ENCODE measurements at regions of chrX and their contacts with region 1.

Region 1: DNA sequence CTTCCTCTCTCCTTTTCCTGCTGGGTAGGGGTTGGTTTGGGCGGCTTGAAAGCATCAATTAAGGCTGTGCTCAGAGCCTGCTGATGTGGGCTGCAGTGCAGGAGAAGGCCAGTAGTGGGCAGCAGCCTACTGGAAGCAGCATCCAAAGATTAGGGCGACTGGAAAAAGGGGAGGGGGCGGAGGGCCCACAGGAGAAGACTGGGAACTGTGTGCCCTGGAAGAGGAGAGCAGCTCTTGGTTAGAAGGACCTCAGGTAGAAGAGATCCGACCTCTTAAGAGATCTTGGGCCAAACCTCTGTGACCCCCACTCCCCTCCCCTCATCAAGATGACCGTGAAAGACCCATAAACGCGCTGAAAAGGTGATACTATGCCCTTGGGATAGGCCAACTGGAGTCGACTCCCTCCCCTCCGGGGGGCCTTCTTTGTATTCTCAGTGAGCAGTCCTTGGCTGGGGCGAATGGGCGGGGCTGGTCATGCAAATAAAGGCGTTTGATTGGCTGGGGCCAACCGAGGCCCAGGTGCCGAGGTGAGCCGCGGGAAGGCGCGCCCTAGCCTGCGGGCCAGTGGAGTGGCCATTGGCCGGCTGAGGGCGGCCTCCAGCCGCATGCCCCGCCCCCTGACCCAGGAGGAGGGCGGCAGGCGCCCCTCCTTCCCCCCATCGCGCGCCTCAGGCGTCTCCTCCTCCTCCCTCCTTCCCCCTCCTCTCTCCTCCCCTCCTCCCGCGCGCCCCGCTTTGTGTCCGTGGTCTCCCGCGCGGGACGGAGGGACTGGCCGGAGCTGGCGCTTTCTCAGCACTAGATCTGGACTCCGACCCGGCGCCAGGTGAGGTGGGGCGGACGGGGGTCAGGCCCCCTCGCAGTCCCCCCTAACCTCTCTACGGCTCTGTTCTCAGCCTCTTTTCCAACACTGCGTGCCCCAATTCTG is 10.1 kb downstream of the DLG3 start:
- DNase-seq: peak; percentile 65 to 87 (median 76)
- H3K4me3 ChIP-seq: peak overlapping the region in 2 of 4 donors; percentile 43 to 51
- H3K27ac ChIP-seq: peak overlapping the region in 2 of 5 donors; percentile 18 to 52
- H3K4me1 ChIP-seq: no peaks in the 10 kb centered on the region
- H3K27me3 ChIP-seq: peaks cover 8% of the 10 kb centered on the region
- CTCF ChIP-seq: peak; percentile 66 to 77 (median 74)
- POLR2A ChIP-seq: no peak

Region 2: GRCh38 chrX:70332600-70332999 is 122.1 kb before region 1 on chrX:
- intact Hi-C with region 1: no loop called
- DNase-seq: no peak
- H3K4me3 ChIP-seq: no peak overlapping the region
- H3K27ac ChIP-seq: no peak overlapping the region
- H3K4me1 ChIP-seq: no peaks in the 10 kb centered on the region
- H3K27me3 ChIP-seq: peaks cover 20% of the 10 kb centered on the region
- CTCF ChIP-seq: no peak
- POLR2A ChIP-seq: no peak

Region 3: GRCh38 chrX:70554081-70554480 is 99.4 kb after region 1 on chrX:
- intact Hi-C with region 1: loop called in 1 of 2 experiments (anchors 5 kb)
- DNase-seq: no peak
- H3K4me3 ChIP-seq: no peak overlapping the region
- H3K27ac ChIP-seq: no peak overlapping the region
- H3K4me1 ChIP-seq: no peaks in the 10 kb centered on the region
- H3K27me3 ChIP-seq: peaks cover 5% of the 10 kb centered on the region
- CTCF ChIP-seq: peak in 2 of 6 experiments; percentile 18 to 21
- POLR2A ChIP-seq: no peak

Region 4: DNA sequence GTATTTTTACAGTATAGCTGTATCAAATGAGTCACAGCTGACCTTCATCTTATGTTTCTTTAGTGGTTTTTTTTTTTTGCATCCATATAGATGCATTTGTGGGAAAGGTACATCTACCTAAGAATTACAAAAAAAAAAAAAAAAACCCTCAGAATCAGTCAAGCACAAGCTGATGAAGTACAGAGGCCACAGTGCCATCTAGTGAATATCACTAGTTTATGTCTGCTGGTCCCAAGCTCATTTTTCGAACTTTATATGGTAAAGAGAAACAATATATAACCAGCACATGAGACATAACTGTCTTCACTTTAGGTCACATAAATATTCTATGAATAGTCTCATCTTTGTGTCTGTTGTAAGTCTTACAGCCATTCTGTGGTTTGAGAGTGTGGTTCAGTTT is 210.0 kb after region 1 on chrX:
- intact Hi-C with region 1: loop called in 1 of 2 experiments (anchors 5 kb)
- DNase-seq: peak in 2 of 7 donors; percentile 3 to 13
- H3K4me3 ChIP-seq: no peak overlapping the region
- H3K27ac ChIP-seq: no peak overlapping the region
- H3K4me1 ChIP-seq: no peaks in the 10 kb centered on the region
- H3K27me3 ChIP-seq: peaks cover 25% of the 10 kb centered on the region
- CTCF ChIP-seq: peak in 3 of 6 experiments; percentile 11 to 47 (median 28)
- POLR2A ChIP-seq: no peak